Activated CD8-positive, alpha-beta T cell treated with anti-CD3 and anti-CD28 coated beads for 36 hours (primary cell): ENCODE measurements at regions of chr9 and their contacts with region 1.

Region 1: DNA sequence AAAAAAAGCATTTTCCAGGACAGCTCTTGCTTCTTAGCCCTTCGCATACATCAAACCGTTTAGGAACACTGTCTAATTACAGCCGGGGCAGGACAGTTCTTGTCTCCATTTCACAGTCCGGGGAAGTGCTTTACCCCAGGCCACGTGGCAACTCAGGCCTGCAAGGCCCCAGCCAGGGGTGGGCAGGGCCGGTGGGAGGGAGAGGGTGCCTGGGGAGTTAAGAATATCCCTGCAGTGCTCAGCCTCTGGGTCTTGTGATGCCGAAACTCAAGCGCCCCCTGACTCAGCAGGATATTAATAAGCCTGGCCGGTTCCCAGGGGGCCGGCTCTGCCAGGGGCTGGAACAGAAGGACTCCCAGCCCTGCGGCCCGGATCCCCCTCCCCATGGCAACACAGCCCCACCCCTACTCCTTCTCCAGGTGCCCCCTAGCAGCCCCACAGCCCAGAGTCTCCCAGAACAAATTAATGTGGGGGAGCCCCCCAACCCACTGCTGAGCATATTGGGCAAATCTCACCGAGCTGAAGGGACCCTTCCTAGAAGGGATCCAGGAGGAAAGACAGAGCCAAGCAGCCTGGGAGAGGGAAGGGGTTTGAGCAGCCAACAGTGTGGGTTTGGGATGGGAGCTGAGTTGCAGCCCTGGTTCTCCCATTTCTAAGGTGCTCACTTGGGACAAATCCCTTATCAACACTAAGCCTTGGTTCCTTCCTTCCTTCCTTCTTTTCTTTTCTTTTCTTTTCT is 45.3 kb downstream of the PLPP7 start:
- DNase-seq: no peak
- ATAC-seq: no peak
- H3K4me3 Mint-ChIP-seq: no peak overlapping the region
- H3K27ac Mint-ChIP-seq: no peak overlapping the region
- H3K4me1 Mint-ChIP-seq: peaks cover 3% of the 10 kb centered on the region
- H3K27me3 Mint-ChIP-seq: no peaks in the 10 kb centered on the region
- CTCF ChIP-seq: no peak

Region 2: DNA sequence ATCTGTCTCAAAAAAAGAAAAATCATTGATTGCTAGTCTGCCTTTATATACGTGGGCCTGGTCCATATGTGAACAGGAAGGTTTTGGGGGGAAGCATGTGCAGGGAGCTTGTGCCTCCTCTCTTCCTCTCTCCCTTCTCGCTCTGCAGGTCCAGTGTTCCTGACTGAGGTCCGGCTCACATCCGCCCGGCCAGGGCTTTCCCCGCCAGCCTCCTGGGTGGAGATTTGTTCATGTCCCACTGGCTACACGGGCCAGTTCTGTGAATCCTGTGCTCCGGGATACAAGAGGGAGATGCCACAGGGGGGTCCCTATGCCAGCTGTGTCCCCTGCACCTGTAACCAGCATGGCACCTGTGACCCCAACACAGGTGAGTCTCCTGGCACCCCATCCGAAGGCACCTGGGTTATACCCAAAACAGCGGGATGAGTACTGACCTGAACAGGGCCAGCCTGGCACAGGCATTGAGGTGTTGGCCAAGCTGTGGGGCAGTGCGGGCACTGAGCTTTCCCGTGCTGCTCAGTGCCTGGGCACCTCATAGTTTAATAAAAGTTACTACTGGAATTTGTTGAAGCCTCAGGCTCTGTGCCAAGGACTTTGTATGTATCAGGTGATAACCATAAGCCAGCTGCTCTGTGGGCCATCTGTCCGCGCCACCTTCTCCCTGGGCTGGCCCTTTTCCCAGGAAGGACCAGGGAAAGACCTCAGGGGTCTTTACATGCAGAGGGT is 277.9 kb before region 1 on chr9:
- CTCF ChIA-PET with region 1: interaction called, 26 read pairs
- POLR2A ChIA-PET with region 1: no interaction called
- intact Hi-C with region 1: loop called (anchors 5 kb)
- DNase-seq: no peak
- ATAC-seq: no peak
- H3K4me3 Mint-ChIP-seq: no peak overlapping the region
- H3K27ac Mint-ChIP-seq: no peak overlapping the region
- H3K4me1 Mint-ChIP-seq: no peaks in the 10 kb centered on the region
- H3K27me3 Mint-ChIP-seq: no peaks in the 10 kb centered on the region
- CTCF ChIP-seq: no peak

Region 3: DNA sequence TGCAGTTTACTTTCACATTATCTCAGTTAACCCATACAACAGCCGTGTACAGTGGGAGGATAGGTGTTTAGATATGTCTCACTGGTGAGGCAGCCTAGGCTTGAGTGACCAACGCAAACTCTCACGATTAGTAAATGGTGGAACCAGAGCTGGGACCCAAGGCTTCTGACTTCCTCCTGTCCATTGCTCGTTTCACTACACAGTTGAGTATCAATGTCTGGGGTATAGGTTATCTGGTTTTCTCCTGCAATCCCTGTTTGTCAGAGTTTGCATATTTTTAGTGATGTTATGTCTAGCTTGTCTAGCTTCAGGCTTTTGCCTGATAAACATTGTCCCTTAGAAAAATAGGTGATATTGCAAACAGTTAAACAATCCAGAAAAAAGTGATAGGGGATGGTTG is 146.8 kb before region 1 on chr9:
- CTCF ChIA-PET with region 1: interaction called, 164 read pairs
- POLR2A ChIA-PET with region 1: no interaction called
- intact Hi-C with region 1: no loop called
- DNase-seq: no peak
- ATAC-seq: no peak
- H3K4me3 Mint-ChIP-seq: no peak overlapping the region
- H3K27ac Mint-ChIP-seq: no peak overlapping the region
- H3K4me1 Mint-ChIP-seq: no peaks in the 10 kb centered on the region
- H3K27me3 Mint-ChIP-seq: no peaks in the 10 kb centered on the region
- CTCF ChIP-seq: no peak

Region 4: DNA sequence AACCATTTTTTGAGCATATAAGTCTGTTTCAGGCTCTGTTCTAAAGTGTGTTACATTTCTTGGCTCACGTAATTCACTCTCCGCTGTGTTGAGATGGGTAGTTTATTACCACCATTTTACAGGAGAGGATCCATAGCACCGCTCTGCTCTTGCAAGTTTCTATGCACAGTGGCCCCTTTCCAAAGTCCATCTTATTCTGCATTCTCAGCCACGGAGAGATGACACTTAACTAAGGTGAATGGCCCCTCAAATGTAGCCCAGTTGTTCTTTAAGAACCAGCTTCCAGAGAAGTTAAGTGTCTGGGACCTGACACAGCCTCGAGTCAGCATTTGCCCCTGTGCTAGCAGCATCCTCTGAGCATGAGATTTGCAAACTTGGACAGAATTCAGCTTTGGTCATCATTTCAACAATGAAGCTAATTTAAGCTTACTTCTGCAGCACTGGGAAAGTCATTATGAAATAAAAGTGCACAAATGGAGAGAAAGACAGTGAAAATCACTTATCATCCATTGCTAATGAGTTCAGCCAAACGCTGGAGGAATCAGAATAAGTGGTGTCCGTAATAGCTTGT is 120.4 kb before region 1 on chr9:
- CTCF ChIA-PET with region 1: interaction called, 20 read pairs
- POLR2A ChIA-PET with region 1: no interaction called
- intact Hi-C with region 1: no loop called
- DNase-seq: no peak
- ATAC-seq: no peak
- H3K4me3 Mint-ChIP-seq: no peak overlapping the region
- H3K27ac Mint-ChIP-seq: no peak overlapping the region
- H3K4me1 Mint-ChIP-seq: peaks cover 7% of the 10 kb centered on the region
- H3K27me3 Mint-ChIP-seq: no peaks in the 10 kb centered on the region
- CTCF ChIP-seq: no peak

Region 5: GRCh38 chr9:131246618-131247017 is 88.2 kb before region 1 on chr9:
- CTCF ChIA-PET with region 1: interaction called, 12 read pairs
- POLR2A ChIA-PET with region 1: no interaction called
- intact Hi-C with region 1: no loop called
- DNase-seq: no peak
- ATAC-seq: no peak
- H3K4me3 Mint-ChIP-seq: no peak overlapping the region
- H3K27ac Mint-ChIP-seq: no peak overlapping the region
- H3K4me1 Mint-ChIP-seq: peaks cover under 1% of the 10 kb centered on the region
- H3K27me3 Mint-ChIP-seq: no peaks in the 10 kb centered on the region
- CTCF ChIP-seq: no peak

Region 6: GRCh38 chr9:131291795-131292315 is 42.9 kb before region 1 on chr9:
- CTCF ChIA-PET with region 1: interaction called, 23 read pairs
- POLR2A ChIA-PET with region 1: no interaction called
- intact Hi-C with region 1: no loop called
- DNase-seq: no peak
- ATAC-seq: no peak
- H3K4me3 Mint-ChIP-seq: no peak overlapping the region
- H3K27ac Mint-ChIP-seq: no peak overlapping the region
- H3K4me1 Mint-ChIP-seq: no peaks in the 10 kb centered on the region
- H3K27me3 Mint-ChIP-seq: no peaks in the 10 kb centered on the region
- CTCF ChIP-seq: no peak

Region 7: DNA sequence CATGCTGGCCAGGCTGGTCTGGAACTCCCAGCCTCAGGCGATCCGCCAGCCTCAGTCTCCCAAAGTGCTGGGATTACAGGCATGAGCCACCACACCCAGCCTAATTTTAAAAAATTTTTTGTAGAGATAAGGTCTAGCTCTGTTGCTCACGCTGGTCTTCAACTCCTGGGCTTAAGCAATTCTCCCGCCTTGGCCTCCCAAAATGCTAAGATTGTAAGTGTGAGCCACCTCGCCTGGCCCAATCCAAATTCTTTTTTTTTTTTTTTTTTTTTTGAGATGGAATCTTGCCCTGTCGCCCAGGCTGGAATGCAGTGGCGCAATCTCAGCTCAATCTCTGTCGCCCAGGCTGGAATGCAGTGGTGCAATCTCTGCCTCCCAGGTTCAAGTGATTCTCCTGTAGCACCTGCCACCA is 17.8 kb before region 1 on chr9:
- CTCF ChIA-PET with region 1: interaction called, 9 read pairs
- POLR2A ChIA-PET with region 1: no interaction called
- intact Hi-C with region 1: loop called (anchors 2 kb)
- DNase-seq: no peak
- ATAC-seq: no peak
- H3K4me3 Mint-ChIP-seq: no peak overlapping the region
- H3K27ac Mint-ChIP-seq: no peak overlapping the region
- H3K4me1 Mint-ChIP-seq: no peaks in the 10 kb centered on the region
- H3K27me3 Mint-ChIP-seq: no peaks in the 10 kb centered on the region
- CTCF ChIP-seq: no peak

Region 8: DNA sequence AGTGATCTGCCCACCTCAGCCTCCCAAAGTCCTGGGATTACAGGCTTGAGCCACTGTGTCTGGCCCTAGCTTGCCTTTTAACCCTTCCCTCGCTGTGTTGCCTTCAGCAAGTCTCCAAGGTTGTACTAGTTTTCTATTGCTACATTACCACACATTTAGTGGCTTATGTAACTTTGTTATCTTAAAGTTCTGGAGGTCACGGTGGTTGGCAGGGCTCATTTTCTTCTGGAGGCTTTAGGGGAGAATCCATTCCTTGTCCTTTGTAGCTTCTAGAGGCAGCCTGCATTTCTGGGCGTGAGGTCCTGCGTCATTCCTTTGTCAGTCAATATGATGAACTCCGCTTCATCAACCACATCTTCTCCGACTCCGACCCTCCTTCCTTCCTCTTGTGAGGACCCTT is 56.2 kb after region 1 on chr9:
- CTCF ChIA-PET with region 1: no interaction called
- POLR2A ChIA-PET with region 1: no interaction called
- intact Hi-C with region 1: no loop called
- DNase-seq: no peak
- ATAC-seq: no peak
- H3K4me3 Mint-ChIP-seq: no peak overlapping the region
- H3K27ac Mint-ChIP-seq: no peak overlapping the region
- H3K4me1 Mint-ChIP-seq: peaks cover 15% of the 10 kb centered on the region
- H3K27me3 Mint-ChIP-seq: no peaks in the 10 kb centered on the region
- CTCF ChIP-seq: no peak